Heart right ventricle (tissue), 16 donors: ENCODE measurements at regions of chr9 and their contacts with region 1.

Region 1: DNA sequence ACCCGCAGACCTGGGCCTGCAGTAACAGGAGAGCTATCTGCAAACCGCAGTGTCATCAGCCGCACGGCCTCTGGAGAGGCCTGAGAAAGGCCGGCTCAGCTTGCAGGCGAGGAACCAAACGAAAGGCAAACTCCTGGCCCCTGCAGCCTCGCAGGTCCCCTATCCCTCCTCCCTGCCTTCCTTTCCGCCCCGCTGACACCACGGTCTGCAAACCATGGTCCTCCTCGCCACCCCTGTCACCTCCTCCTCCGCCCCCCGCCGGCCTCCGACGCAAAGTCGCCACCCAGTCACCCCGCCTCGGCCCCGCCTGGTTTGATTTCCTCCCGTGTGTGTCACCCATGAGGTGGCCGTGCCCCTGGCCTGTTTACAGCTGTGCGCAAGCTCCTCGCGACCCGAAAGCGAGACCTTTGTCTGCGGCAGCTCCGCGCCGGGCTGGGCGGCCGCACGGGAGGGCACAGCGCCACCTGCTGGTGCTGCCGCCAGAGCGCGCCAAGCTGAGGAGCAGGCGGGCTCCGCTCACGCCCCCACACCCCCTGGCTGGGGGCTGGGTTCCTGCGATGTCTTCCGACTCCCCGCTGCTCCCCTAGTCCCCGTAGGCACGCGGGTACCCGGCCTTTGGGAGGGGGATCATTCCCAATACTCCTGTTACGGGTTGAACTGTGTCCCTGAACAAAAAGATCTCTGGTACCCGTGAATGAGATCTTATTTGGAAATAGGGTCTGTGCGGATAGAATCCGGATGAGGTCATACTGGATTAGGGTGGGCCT is 19.4 kb downstream of the GBGT1 start:
- DNase-seq: peak; percentile 70 to 83
- ATAC-seq: peak; percentile 30 to 58 (median 52)
- H3K4me3 ChIP-seq: peak overlapping the region in 9 of 10 donors; percentile 17 to 50 (median 48)
- H3K27ac ChIP-seq: peak overlapping the region in 9 of 10 donors; percentile 9 to 81 (median 56)
- H3K4me1 ChIP-seq: peaks cover 19 to 75% (median 64%) of the 10 kb centered on the region in 9 donors
- H3K27me3 ChIP-seq: no peaks in the 10 kb centered on the region
- CTCF ChIP-seq: peak; percentile 90 to 100 (median 99)

Region 2: DNA sequence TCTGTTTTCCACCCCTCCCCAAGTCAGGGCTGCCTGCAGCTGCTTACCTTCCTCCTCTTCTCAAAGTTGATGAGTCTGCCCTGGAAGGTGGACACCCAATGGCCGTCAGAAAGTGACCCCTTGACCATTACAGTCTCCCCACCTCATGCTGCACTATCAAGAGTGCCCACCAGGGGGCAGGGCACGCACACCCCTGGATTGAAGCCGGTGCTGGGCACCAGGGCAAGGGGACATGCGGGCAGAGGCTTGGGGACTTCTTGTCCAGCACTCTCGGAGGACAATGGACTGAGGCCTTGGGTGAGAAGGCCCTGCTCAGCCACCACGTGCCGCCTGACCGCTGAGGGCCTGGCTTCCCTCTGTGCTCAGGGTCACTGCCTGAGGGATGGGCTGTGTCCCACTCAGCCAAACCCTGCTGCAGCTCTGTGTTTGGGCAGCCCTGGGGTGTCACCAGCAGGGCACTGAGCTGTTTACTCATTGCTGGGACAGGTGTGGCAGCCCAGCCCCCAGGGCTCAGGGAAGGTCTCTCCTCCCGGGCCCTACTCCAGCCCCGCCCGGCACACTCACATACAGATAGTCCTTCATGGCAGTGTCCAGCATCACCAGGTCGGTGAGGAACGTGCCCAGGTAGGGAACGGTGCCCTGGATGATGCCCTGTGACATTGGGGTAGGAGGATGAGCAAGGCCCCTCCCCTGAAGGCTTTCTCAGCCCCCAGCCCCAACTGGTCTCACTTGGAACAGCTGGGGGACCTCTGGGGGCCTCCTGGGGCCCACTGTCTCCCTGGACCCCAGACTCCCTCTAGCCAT is 40.9 kb before region 1 on chr9:
- intact Hi-C with region 1: loop called (anchors 1 to 2 kb)
- DNase-seq: peak; percentile 61 to 78
- ATAC-seq: peak; percentile 62 to 81 (median 74)
- H3K4me3 ChIP-seq: no peak overlapping the region
- H3K27ac ChIP-seq: peak overlapping the region in 2 of 10 donors; percentile 30 to 32
- H3K4me1 ChIP-seq: peaks cover 0 to 7% (median 0%) of the 10 kb centered on the region in 9 donors
- H3K27me3 ChIP-seq: no peaks in the 10 kb centered on the region
- CTCF ChIP-seq: peak; percentile 95 to 99 (median 96)

Region 3: GRCh38 chr9:133121198-133121939 is 23.0 kb before region 1 on chr9 and contains the start of gene RALGDS:
- intact Hi-C with region 1: loop called in 1 of 10 experiments (anchors 2 kb)
- DNase-seq: peak; percentile 91 to 93
- ATAC-seq: peak; percentile 79 to 91 (median 84)
- H3K4me3 ChIP-seq: peak within 1 kb of the TSS; percentile 72 to 96 (median 86)
- H3K27ac ChIP-seq: peak within 1 kb of the TSS; percentile 35 to 96 (median 93)
- H3K4me1 ChIP-seq: peaks cover 48 to 89% (median 75%) of the 10 kb centered on the region in 9 donors
- H3K27me3 ChIP-seq: no peaks in the 10 kb centered on the region
- CTCF ChIP-seq: no peak
- total RNA-seq, gene RALGDS: 21.4 to 45.1 (median 28.1) TPM

Region 4: GRCh38 chr9:133210202-133210532 is 65.8 kb after region 1 on chr9:
- intact Hi-C with region 1: no loop called
- DNase-seq: no peak
- ATAC-seq: no peak
- H3K4me3 ChIP-seq: no peak overlapping the region
- H3K27ac ChIP-seq: no peak overlapping the region
- H3K4me1 ChIP-seq: no peaks in the 10 kb centered on the region
- H3K27me3 ChIP-seq: peaks cover 0 to 17% (median 0%) of the 10 kb centered on the region in 7 donors
- CTCF ChIP-seq: no peak

Region 5: GRCh38 chr9:133437753-133438531 is 293.6 kb after region 1 on chr9:
- intact Hi-C with region 1: no loop called
- DNase-seq: no peak
- ATAC-seq: no peak
- H3K4me3 ChIP-seq: no peak overlapping the region
- H3K27ac ChIP-seq: no peak overlapping the region
- H3K4me1 ChIP-seq: no peaks in the 10 kb centered on the region
- H3K27me3 ChIP-seq: no peaks in the 10 kb centered on the region
- CTCF ChIP-seq: no peak